ENCODE measurements at regions of chr22 and their contacts with region 1.

Region 1: DNA sequence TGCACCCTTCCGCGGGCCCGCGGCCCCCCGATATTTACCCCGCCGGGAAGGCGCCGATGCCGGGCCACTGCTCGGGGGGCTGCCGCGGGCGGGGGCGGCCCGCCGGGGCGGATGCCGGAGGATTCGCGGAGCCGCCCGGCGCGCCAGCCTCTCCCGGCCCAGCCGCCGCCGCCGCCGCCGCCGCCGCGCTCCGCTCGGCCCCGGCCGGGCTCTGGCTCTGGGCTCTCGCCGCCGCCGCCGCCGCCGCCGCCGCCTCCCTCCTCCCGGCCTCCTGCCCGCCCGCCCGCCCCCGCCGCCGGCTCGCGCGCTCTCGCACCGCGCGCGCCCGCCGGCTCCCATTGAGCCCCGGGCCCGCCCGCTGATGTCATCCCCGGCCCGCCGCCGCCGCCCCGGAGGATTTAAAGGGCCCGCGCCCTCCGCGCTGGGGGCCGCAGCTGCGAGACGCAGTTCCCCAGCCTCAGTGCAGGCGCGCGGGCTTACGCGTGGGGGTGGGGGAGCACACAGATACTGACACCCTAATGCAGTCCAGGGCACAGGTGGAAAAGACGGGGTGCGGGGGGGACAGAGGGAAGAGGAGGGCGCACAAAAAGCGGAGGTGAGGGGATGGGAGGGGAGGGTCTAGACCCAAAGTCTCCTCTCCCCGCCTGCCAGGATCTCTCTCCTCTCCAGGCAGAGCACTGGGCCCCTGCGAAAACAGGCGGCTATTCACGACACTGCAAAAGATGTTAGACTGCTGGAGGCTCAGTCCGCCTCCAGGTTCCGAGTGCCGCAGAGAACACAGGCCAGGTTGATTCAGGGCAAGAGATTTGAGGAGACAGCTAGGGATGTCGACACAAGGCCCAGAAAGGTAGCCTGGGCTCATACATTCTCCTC is at the start of gene CSNK1E:
- DNase-seq: peak; percentile 68
- H3K4me3 Mint-ChIP-seq: peak within 1 kb of the TSS; percentile 89
- H3K27ac Mint-ChIP-seq: peak within 1 kb of the TSS; percentile 91
- H3K4me1 Mint-ChIP-seq: peaks cover 31% of the 10 kb centered on the region
- H3K27me3 Mint-ChIP-seq: no peaks in the 10 kb centered on the region
- total RNA-seq, gene CSNK1E: 155 and 160 TPM in 2 replicates

Region 2: DNA sequence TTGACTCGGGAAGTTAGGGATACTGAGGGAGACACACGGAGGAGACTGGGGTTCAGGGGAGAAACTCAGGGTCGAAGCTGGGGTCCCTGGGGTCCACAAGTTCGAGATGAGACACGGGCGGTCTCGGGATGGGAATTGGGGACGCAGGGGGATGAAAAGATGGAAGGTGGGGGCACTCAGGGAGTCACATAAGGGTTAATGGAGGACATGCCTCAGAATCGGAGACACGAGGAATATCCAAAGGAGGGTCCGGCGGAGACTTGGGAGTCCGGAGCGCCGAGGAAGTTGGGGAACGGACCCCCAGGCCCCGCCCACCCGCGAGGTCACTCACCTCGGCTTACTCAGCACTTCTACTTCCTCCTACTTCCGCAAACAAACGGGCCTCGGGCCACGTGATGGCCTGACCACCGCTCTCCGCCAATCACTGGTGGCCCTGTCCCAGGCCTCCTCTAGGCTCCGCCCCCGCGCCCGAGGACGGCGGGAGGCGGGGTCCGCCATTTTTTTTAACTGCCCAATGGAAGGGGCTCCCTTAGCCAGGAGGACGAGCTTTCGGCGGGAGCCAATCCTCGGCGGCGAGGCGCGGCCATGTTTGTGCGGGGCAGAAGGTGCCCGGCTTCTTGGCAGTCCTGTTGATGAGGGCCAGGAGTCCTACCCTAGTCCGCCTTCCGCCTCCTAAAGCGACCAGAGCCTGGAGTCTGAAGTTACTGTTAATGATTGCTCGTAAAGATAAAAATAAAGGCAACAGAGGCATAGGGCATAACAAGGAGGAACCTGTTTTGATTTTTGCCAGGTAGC is 135.7 kb before region 1 on chr22 and contains the start of gene PLA2G6:
- intact Hi-C with region 1: loop called (anchors 5 kb)
- DNase-seq: peak; percentile 99
- H3K4me3 Mint-ChIP-seq: peak within 1 kb of the TSS; percentile 96
- H3K27ac Mint-ChIP-seq: peak within 1 kb of the TSS; percentile 97
- H3K4me1 Mint-ChIP-seq: peaks cover 32% of the 10 kb centered on the region
- H3K27me3 Mint-ChIP-seq: peaks cover 5% of the 10 kb centered on the region
- total RNA-seq, gene PLA2G6: 32.8 and 36.0 TPM in 2 replicates

Region 3: DNA sequence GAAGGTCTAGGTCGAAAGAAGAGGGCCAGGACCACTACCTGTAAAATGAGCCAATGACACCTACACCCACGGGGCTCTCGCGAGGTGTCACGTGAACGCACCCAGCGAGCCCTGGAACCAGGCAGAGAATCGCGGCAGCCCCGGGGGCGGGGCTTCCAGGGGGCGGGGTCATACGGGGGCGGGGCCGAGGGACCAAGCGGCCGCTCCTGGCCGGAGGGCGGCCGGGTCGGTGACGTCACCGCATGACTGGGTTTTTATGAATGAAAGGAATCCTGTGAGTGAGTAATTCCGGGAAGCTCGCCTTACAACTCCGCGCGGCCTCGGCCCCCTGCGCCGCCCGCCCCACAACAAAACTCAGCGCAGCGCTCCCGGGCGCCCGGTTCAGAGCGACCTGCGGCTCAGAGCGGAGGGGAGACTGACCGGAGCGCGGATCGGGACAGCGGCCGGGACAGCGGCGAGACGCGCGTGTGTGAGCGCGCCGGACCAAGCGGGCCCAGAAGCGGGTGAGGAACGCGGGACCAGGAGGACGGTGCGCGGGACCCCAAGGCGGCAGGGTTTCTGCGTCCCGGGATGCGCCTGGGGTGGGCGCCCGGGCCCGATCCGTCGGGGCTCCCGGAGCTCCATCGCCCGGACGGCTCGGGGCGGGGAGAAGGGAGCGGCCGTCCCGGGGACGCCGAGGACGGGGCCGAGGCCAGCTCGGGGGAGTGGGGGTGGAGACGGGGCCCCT is 115.5 kb before region 1 on chr22 and contains the start of gene MAFF:
- intact Hi-C with region 1: loop called (anchors 5 kb)
- DNase-seq: peak; percentile 81
- H3K4me3 Mint-ChIP-seq: peak within 1 kb of the TSS; percentile 83
- H3K27ac Mint-ChIP-seq: peak within 1 kb of the TSS; percentile 87
- H3K4me1 Mint-ChIP-seq: peaks cover 26% of the 10 kb centered on the region
- H3K27me3 Mint-ChIP-seq: no peaks in the 10 kb centered on the region
- total RNA-seq, gene MAFF: 13.5 and 15.3 TPM in 2 replicates

Region 4: DNA sequence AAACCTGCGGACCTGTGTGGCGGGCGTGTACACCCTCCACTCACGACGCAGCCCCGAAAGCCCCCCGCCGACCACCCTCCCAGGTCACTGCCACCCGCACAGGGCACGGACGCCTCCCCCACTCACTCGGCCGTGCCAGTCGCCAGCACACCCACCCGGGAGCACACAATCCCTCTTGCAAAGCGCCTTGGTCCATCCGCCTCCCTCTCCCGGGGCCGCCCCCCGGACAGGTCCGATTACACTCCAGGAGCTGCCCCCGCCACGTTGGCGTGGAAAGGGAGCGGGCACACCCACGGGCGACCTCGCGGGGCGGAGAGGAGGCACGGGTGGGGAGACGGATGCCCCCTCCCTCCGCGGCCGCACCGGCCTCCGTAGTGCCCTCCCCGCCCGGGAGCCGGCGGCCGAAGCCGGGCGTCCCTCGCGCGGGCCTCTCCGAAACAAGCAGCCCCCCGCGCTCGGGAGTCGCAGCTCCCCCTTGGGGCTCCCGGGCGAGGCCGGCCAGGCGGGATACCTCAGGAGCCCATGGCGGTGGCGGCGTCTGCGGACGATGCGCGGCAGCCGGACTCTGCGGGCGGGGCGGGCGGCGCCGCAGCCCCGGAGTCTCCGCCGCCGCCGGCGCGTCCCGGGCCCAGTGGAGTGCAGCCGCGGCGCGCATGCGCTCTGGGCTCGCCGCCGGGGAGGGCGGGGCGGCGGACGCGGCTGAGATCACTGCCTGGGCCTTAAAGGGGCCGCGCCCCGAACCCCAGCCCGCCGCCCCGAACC is 44.8 kb before region 1 on chr22 and contains the start of gene TMEM184B:
- intact Hi-C with region 1: loop called (anchors 5 kb)
- DNase-seq: peak; percentile 81
- H3K4me3 Mint-ChIP-seq: peak within 1 kb of the TSS; percentile 86
- H3K27ac Mint-ChIP-seq: peak within 1 kb of the TSS; percentile 81
- H3K4me1 Mint-ChIP-seq: peaks cover 32% of the 10 kb centered on the region
- H3K27me3 Mint-ChIP-seq: peaks cover 4% of the 10 kb centered on the region
- total RNA-seq, gene TMEM184B: 34.8 and 35.8 TPM in 2 replicates

Measured in activated T-helper 2 cell treated with anti-CD3 and anti-CD28 coated beads, Interferon-gamma antibody, Interleukin-2, Interleukin-4, amounts not matched to agents 10 μg/mL and 5 μg/mL and 100 μg/mL, durations not matched to agents 14 hours and 24 hours and 36 hours (primary cell).